Activated CD4-positive, alpha-beta T cell treated with anti-CD3 and anti-CD28 coated beads for 36 hours (primary cell): ENCODE measurements at regions of chr6 and their contacts with region 1.

Region 1: DNA sequence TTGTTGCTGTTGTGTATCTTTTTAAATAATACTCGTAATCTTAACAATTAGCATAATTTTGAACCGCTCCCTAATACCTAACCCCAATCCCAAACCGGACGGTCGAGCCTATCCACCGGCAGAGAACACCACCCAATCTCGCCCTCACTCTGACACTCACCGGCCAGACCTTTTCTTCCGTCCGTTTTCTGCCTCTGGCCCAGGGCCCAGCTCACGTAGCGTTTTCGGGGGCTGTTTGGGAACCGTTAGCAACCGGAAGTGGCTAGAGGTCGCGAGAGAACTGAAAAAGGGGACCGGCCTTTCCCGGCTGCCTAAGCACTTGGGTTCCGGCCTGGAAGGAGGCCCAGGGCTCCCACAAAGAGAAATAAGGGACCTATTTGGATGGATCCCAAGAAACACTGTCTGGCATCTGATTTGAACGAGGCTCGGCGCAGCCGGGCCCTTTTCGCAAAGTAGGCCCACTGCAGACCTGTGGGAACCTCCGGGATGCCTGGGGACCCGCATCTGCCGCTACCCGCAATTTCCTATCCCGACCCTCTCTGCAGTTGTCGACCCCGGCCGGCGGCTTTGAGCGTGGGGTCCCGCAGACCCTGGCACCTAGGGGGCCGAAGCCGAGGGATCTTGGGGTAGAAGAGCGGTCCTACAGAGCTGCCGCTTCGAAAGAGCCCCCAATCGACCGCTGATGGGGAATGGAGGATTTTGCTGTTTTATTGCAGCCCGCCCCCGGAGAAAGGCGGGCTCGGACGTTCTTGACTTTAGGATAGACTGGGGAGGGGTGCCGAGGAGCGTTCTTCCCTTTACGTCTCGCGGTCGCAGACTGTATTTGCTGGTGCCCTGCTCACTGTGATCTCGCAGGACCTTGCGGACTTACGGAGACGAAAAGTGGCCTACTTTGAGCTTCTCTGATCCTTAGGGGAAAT is 4.8 kb upstream of the ZKSCAN8 start:
- DNase-seq: peak; percentile 85
- ATAC-seq: peak; percentile 45
- H3K4me3 Mint-ChIP-seq: peak overlapping the region; percentile 87
- H3K27ac Mint-ChIP-seq: peak overlapping the region; percentile 96
- H3K4me1 Mint-ChIP-seq: peaks cover 70% of the 10 kb centered on the region
- H3K27me3 Mint-ChIP-seq: no peaks in the 10 kb centered on the region

Region 2: GRCh38 chr6:27838058-27838944 is 298.5 kb before region 1 on chr6:
- CTCF ChIA-PET with region 1: no interaction called
- POLR2A ChIA-PET with region 1: interaction called, 4 read pairs
- intact Hi-C with region 1: loop called (anchors 2 to 10 kb)
- DNase-seq: peak; percentile 89
- ATAC-seq: peak; percentile 74
- H3K4me3 Mint-ChIP-seq: no peak overlapping the region
- H3K27ac Mint-ChIP-seq: no peak overlapping the region
- H3K4me1 Mint-ChIP-seq: peaks cover 23% of the 10 kb centered on the region
- H3K27me3 Mint-ChIP-seq: peaks cover 9% of the 10 kb centered on the region

Region 3: GRCh38 chr6:28104392-28105244 is 32.2 kb before region 1 on chr6:
- CTCF ChIA-PET with region 1: interaction called, 5 read pairs
- POLR2A ChIA-PET with region 1: interaction called, 3 read pairs
- intact Hi-C with region 1: loop called in 1 of 2 experiments (anchors 1 kb)
- DNase-seq: peak; percentile 91
- ATAC-seq: peak; percentile 100
- H3K4me3 Mint-ChIP-seq: peak overlapping the region; percentile 82
- H3K27ac Mint-ChIP-seq: peak overlapping the region; percentile 90
- H3K4me1 Mint-ChIP-seq: peaks cover 9% of the 10 kb centered on the region
- H3K27me3 Mint-ChIP-seq: peaks cover 4% of the 10 kb centered on the region

Region 4: DNA sequence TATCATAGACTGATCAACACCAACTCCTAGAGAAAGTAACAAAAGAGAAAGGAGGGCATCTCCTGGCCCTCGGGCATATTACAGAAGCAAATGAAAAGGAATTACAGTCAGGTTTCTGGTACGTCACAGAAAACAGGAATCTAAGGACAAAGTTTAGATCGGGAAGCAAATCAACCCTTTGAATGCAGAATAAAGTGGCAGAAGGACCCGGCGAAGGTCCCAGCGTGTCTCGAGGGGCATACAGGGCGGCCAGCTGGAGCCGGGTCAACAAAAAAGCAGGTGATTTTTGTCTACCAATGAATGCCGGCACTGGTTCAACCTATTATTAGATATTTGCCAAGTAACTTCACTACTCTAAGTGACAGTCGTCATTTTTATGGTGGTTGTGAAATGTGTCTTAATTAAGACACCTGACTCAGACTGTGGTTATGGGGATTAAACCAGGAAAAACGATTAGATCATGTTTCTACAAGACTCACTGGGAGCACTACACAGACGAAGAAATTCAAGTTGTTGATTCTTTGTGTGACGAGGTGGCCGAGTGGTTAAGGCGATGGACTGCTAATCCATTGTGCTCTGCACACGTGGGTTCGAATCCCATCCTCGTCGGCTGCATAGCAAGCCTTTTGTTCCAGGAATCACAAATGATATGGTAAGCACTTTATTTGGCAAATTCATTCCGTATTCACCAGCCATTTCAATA is 75.8 kb after region 1 on chr6:
- CTCF ChIA-PET with region 1: no interaction called
- POLR2A ChIA-PET with region 1: no interaction called
- intact Hi-C with region 1: loop called in 1 of 2 experiments (anchors 2 kb)
- DNase-seq: peak; percentile 80
- ATAC-seq: peak; percentile 71
- H3K4me3 Mint-ChIP-seq: peak overlapping the region; percentile 64
- H3K27ac Mint-ChIP-seq: peak overlapping the region; percentile 33
- H3K4me1 Mint-ChIP-seq: peaks cover 22% of the 10 kb centered on the region
- H3K27me3 Mint-ChIP-seq: peaks cover 71% of the 10 kb centered on the region

Region 5: DNA sequence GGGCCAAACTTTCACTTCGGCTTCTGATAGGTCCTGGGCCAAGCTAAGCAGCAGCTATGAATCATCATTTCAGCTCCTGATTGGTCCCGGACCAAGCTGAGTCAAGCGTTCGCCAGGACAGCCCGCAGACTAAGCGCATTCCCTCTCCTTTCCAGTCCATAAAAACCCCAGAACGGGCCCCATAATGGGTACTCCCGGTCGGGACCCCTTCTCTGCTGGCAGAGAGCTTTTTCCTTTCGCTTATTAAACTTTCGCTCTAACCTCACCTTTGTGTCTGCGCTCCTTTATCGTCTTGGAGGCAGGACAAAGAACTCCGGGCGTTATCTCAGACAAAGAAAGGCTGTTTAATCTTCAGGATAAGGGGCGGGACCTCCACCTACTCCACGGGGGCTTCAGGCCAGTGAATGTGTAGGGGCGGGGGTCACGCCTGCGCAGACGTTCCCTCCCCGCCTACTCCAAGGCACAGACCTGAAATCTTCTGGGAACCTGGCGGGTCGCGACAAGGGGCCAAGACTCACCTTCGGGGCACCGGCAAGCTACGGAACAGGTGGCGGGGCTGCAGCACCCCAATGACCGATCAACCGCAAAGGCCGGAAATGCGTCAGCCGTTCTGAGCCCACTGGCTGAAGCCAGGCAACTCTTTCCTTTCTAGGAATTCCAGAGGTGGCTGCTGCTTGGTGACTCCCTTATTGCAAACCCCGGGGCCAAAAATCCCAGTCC is 198.9 kb after region 1 on chr6 and contains the start of gene ZSCAN31:
- CTCF ChIA-PET with region 1: no interaction called
- POLR2A ChIA-PET with region 1: no interaction called
- intact Hi-C with region 1: loop called in 1 of 2 experiments (anchors 5 kb)
- DNase-seq: peak; percentile 86
- ATAC-seq: peak; percentile 96
- H3K4me3 Mint-ChIP-seq: no peak within 1 kb of the TSS
- H3K27ac Mint-ChIP-seq: no peak within 1 kb of the TSS
- H3K4me1 Mint-ChIP-seq: peaks cover 7% of the 10 kb centered on the region
- H3K27me3 Mint-ChIP-seq: peaks cover 3% of the 10 kb centered on the region
- total RNA-seq, gene ZSCAN31: 1.3 to 1.8 TPM

Region 6: GRCh38 chr6:28399350-28400121 is 262.7 kb after region 1 on chr6 and contains the start of gene ZSCAN12:
- CTCF ChIA-PET with region 1: no interaction called
- POLR2A ChIA-PET with region 1: no interaction called
- intact Hi-C with region 1: loop called (anchors 1 to 2 kb)
- DNase-seq: peak; percentile 92
- ATAC-seq: peak; percentile 91
- H3K4me3 Mint-ChIP-seq: peak within 1 kb of the TSS; percentile 89
- H3K27ac Mint-ChIP-seq: peak within 1 kb of the TSS; percentile 92
- H3K4me1 Mint-ChIP-seq: peaks cover 42% of the 10 kb centered on the region
- H3K27me3 Mint-ChIP-seq: peaks cover 15% of the 10 kb centered on the region
- total RNA-seq, gene ZSCAN12: 6.9 to 7.6 TPM

Region 7: DNA sequence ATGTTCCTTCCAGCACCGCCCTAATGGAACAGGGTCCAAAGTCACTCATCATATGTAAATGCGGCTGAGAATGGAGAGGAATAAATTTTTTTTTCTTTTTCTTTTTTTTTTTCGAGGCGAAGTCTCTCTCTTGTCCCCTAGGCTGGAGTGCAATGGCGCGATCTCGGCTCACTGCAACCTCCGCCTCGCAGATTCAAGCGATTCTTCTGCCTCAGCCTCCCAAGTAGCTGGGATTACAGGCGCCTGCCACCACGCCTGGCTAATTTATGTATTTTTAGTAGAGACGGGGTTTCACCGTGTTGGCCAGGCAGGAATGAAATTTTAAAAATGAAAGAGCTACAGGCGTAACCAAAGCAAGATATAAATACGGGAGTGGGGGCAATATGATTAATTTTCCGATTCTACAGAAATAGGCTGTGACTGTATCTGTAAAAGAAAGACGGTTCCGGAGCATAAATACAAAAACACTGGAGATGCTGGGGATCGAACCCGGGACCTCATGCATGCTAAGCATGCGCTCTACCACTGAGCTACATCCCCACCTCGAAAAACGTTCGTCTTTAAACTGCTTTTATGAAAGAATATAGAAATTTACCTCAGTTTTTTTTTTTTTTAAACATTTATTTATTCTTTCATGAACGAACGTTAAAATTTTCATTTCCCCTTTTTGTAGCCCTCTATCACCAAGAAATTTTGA is 521.1 kb after region 1 on chr6:
- CTCF ChIA-PET with region 1: no interaction called
- POLR2A ChIA-PET with region 1: no interaction called
- intact Hi-C with region 1: loop called in 1 of 2 experiments (anchors 5 kb)
- DNase-seq: peak; percentile 84
- ATAC-seq: peak; percentile 94
- H3K4me3 Mint-ChIP-seq: peak overlapping the region; percentile 77
- H3K27ac Mint-ChIP-seq: peak overlapping the region; percentile 76
- H3K4me1 Mint-ChIP-seq: peaks cover 24% of the 10 kb centered on the region
- H3K27me3 Mint-ChIP-seq: peaks cover 50% of the 10 kb centered on the region